ENCODE measurements at regions of chr21 and their contacts with region 1.

Region 1: DNA sequence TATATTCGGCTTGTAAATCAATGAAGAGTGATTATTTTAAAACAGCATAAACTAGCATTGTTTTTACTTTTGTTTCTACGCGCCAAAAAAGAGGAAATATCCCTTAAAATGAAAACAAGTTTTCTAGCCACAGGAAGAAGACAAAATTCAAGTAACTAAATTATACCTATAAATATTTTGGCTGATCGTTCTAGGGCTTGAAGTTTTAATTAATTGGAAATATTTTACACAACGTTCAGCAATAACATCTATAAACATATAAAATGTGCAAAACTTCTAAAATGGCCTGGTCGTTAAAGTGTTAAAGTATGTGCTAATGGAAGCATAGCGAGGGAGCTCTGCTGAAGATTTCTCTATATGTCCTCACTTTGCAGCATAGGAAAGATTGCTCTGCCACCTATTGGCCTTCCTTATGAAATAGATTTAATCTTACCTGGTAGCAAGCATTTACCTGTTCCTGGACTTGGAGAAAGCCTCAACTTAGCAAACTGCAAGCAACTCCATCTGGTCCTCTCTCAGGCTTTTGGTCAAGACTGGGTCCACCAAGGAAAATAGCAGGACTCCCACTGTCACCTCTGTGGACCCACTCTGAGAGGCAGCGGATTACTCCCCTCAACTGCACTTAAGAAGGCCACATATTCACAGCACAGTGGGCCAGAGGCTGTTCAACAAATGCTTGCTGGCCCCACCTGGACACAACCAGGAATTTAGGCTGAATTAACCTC is 351.3 kb upstream of the RUNX1 start:
- DNase-seq: peak; percentile 74
- H3K4me3 Mint-ChIP-seq: no peak overlapping the region
- H3K27ac Mint-ChIP-seq: peak overlapping the region; percentile 10
- H3K4me1 Mint-ChIP-seq: peaks cover 17% of the 10 kb centered on the region
- H3K27me3 Mint-ChIP-seq: no peaks in the 10 kb centered on the region
- CTCF ChIP-seq: peak; percentile 65

Region 2: DNA sequence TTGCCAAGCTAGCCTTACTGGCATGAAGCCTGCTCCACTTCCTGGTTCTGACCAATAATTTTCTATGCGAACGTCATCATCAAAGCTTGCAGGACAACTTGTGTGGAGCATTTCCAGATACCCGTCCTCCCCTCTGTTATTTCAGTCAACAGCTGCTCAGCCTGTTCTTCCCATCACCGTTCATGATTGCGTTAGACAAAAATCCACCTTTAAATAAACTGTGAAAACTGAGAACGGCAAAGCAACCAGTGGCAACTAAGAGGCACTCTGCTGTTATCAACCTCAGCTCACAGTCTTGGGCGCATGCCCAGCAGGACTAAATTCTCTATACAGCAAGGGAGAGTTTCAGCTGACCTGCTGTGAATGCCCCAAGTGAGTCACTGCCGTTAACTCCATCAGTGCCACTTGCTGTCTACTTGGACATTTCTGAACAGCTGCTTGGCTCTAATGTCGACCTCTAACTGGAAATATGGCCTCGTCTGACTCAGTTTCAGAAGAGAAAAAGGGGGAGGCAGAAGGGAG is 143.9 kb before region 1 on chr21:
- CTCF ChIA-PET with region 1: interaction called, 5 read pairs
- POLR2A ChIA-PET with region 1: interaction called, 10 read pairs
- intact Hi-C with region 1: loop called (anchors 1 kb)
- DNase-seq: peak; percentile 99
- H3K4me3 Mint-ChIP-seq: peak overlapping the region; percentile 66
- H3K27ac Mint-ChIP-seq: peak overlapping the region; percentile 89
- H3K4me1 Mint-ChIP-seq: peaks cover 48% of the 10 kb centered on the region
- H3K27me3 Mint-ChIP-seq: no peaks in the 10 kb centered on the region
- CTCF ChIP-seq: no peak

Region 3: DNA sequence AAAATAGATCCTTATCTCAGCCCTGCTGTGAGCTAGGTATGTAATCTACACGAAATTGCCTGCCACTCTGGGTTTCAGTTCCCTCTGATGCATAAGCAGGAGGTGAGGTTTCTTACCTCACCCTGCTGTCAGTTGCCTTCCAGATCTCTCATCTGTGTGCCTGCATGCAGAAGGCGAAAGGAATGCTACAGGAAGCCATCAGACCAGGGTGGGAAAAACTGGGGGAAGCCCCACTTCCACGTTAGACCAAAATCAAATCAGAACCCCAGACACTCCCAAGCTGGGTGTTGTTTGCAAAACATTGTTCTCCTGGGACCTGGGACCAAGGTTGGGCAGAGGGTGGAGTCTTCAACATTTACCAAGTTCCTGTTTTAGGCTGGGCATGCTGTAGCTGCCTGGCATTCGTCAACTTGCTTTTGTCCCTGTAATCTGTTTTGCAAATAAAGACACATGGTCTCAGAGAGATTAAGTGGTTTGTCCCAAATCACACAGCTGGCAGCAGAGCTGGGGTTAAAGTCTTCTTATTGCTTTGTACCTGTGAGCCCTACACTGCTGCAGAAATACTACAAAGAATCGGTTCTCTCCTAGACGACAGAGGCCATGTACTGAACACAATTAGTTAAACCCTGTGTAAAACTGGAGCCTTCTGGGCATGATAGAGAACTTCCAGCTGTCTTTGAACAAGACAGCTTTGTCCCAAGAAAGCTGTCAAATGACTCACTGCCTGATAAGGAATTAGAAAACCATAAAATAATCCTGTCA is 38.4 kb after region 1 on chr21:
- CTCF ChIA-PET with region 1: no interaction called
- POLR2A ChIA-PET with region 1: no interaction called
- intact Hi-C with region 1: no loop called
- DNase-seq: no peak
- H3K4me3 Mint-ChIP-seq: no peak overlapping the region
- H3K27ac Mint-ChIP-seq: no peak overlapping the region
- H3K4me1 Mint-ChIP-seq: no peaks in the 10 kb centered on the region
- H3K27me3 Mint-ChIP-seq: peaks cover 77% of the 10 kb centered on the region
- CTCF ChIP-seq: no peak

Region 4: GRCh38 chr21:35467566-35467965 is 67.2 kb after region 1 on chr21:
- CTCF ChIA-PET with region 1: no interaction called
- POLR2A ChIA-PET with region 1: no interaction called
- intact Hi-C with region 1: no loop called
- DNase-seq: no peak
- H3K4me3 Mint-ChIP-seq: no peak overlapping the region
- H3K27ac Mint-ChIP-seq: no peak overlapping the region
- H3K4me1 Mint-ChIP-seq: no peaks in the 10 kb centered on the region
- H3K27me3 Mint-ChIP-seq: no peaks in the 10 kb centered on the region
- CTCF ChIP-seq: no peak

Region 5: DNA sequence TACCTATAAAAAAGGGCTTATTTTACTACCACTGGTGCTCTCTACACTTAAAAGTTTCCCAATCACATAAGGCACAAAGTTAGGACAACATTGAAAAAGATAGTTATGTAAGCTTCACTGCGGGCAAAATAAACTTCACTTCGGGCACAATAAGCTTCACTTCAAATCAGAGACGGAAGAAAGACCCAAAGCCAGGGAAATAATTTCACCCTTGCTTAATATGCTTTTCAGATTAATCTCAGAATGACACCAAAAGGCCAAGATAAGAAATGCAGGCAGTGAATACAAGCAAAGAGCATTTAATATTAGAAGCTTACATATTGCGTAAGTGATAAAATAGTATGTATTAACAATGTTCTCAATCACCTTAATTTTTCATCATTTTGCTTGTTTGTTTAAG is 215.7 kb after region 1 on chr21:
- CTCF ChIA-PET with region 1: interaction called, 3 read pairs
- POLR2A ChIA-PET with region 1: no interaction called
- intact Hi-C with region 1: loop called (anchors 1 kb)
- DNase-seq: peak; percentile 44
- H3K4me3 Mint-ChIP-seq: no peak overlapping the region
- H3K27ac Mint-ChIP-seq: no peak overlapping the region
- H3K4me1 Mint-ChIP-seq: peaks cover 27% of the 10 kb centered on the region
- H3K27me3 Mint-ChIP-seq: no peaks in the 10 kb centered on the region
- CTCF ChIP-seq: peak; percentile 47

Region 6: GRCh38 chr21:35940074-35940927 is 539.9 kb after region 1 on chr21:
- CTCF ChIA-PET with region 1: interaction called, 3 read pairs
- POLR2A ChIA-PET with region 1: no interaction called
- intact Hi-C with region 1: loop called (anchors 2 kb)
- DNase-seq: peak; percentile 74
- H3K4me3 Mint-ChIP-seq: no peak overlapping the region
- H3K27ac Mint-ChIP-seq: no peak overlapping the region
- H3K4me1 Mint-ChIP-seq: no peaks in the 10 kb centered on the region
- H3K27me3 Mint-ChIP-seq: no peaks in the 10 kb centered on the region
- CTCF ChIP-seq: peak; percentile 66